Activated CD4-positive, alpha-beta T cell treated with anti-CD3 and anti-CD28 coated beads, Interleukin-2, amount 10 ng/mL, durations not matched to agents 24 days and 14 days (primary cell): ENCODE measurements at regions of chr3 and their contacts with region 1.

Region 1: DNA sequence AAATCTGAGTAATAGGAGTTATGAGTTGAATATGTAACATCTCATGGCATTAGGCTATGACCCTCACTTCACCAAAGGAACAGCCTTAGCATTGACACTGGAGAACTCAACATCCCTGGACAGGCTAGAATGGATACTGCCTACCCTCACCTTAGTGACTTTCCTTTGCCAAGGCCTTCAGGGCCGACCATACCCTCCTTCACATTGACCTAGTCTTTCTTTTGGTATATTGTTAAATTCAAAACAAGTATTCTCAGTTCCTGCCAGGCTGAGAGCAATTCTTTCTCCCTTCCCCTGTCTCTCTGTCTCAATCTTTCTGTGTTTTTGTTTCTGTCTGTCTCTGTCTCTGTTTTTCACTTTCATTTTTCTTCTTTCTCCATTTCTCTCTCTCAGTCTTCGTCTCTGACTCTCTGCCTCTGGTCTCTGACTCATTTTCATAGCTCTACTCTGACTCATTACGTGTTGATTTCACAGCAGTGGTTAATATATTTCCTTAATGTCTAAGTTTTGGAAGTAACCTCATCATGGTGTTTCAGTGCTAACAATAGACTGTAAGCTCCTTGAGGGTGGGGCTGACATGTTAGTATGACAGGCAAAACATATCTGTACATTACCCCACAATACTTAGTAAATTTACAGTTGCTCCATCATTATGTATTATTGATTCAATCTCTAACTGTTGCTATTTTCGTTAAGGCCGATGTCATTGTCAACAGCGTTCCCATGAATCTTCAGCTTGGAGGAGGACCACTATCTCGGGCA is 32.5 kb downstream of the PARP15 start:
- DNase-seq: peak; percentile 81
- H3K4me3 Mint-ChIP-seq: peak overlapping the region; percentile 72
- H3K27ac Mint-ChIP-seq: peak overlapping the region; percentile 90
- H3K4me1 Mint-ChIP-seq: peaks cover 32% of the 10 kb centered on the region
- H3K27me3 Mint-ChIP-seq: no peaks in the 10 kb centered on the region

Region 2: GRCh38 chr3:122484985-122485384 is 125.0 kb before region 1 on chr3:
- intact Hi-C with region 1: loop called (anchors 1 kb)
- DNase-seq: no peak
- H3K4me3 Mint-ChIP-seq: no peak overlapping the region
- H3K27ac Mint-ChIP-seq: peak overlapping the region; percentile 54
- H3K4me1 Mint-ChIP-seq: peaks cover 41% of the 10 kb centered on the region
- H3K27me3 Mint-ChIP-seq: no peaks in the 10 kb centered on the region

Region 3: GRCh38 chr3:122576174-122576940 is 33.6 kb before region 1 on chr3:
- intact Hi-C with region 1: loop called (anchors 1 kb)
- DNase-seq: peak; percentile 67
- H3K4me3 Mint-ChIP-seq: peak overlapping the region; percentile 1
- H3K27ac Mint-ChIP-seq: peak overlapping the region; percentile 70
- H3K4me1 Mint-ChIP-seq: peaks cover 58% of the 10 kb centered on the region
- H3K27me3 Mint-ChIP-seq: no peaks in the 10 kb centered on the region

Region 4: DNA sequence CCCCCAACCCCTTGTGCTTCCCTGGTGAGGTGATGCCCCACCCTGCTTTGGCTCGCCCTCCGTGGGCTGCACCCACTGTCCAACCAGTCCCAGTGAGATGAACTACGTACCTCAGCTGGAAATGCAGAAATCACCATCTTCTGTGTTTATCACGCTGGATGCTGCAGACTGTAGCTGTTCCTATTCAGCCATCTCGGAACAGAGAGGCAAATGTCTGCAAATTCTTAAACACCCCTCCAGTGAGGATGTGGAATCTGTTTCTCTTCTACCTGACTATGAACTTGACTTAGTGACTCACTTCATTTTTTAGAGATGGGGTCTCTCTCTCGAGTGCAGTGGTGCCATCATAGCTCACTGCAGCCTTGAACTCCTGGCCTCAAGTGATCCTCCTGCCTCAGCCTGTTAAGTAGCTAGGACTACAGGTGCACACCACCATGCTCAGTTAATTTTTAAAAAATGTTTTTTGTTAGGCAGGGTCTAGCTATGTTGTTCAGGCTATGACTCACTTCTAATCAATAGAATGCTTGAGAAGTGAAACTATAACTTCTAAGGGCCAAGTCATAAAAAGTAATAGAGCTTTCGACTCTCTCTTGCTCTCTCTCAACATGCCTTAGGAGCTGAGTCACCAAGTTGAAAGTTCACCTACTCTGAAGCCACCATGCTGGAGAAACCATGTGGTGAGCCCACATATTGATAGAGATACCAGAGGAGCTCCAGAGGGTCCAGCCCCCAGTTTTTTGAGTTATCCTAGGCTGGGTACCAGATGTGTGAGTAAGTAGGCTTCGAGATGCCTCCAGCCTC is 59.2 kb after region 1 on chr3:
- intact Hi-C with region 1: loop called (anchors 1 kb)
- DNase-seq: peak; percentile 78
- H3K4me3 Mint-ChIP-seq: peak overlapping the region; percentile 49
- H3K27ac Mint-ChIP-seq: peak overlapping the region; percentile 85
- H3K4me1 Mint-ChIP-seq: peaks cover 17% of the 10 kb centered on the region
- H3K27me3 Mint-ChIP-seq: no peaks in the 10 kb centered on the region